MCF 10A (cell line): ENCODE measurements at regions of chr1 and their contacts with region 1.

Region 1: GRCh38 chr1:225603538-225604354 is 49.2 kb downstream of the ENAH start:
- DNase-seq: peak; percentile 86
- H3K4me3 Mint-ChIP-seq: peak overlapping the region; percentile 68
- H3K27ac Mint-ChIP-seq: peak overlapping the region; percentile 95
- H3K4me1 Mint-ChIP-seq: peaks cover 61% of the 10 kb centered on the region
- H3K27me3 Mint-ChIP-seq: no peaks in the 10 kb centered on the region
- CTCF ChIP-seq: no peak

Region 2: DNA sequence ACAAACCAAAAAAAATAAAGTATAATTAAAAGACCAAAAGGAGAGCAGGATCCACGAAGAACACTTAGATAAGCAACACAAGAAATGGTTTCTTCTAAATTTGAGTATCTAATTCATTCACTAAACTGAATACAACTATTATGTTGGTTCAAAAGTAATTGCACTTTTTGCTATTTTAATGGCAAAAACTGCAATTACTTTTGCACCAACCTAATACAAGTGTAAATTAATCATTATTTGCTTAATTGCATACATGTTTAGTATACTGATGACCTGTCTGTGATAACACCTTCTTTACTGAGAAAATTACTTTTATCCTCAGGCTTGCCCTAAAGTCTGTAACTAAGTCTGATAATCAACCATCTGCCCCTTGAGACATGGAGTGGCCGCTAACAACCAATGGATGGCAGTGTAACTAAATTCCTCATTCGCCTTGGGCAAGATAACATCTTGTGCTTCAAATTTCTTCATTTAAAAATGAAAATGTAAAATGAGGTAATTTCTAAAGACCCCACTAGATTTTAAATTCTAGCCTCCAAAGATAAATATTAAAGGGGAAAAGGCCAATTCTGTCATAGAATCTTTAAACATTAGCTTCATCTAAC is 36.1 kb before region 1 on chr1:
- CTCF ChIA-PET with region 1: interaction called, 3 read pairs
- POLR2A ChIA-PET with region 1: interaction called, 11 read pairs
- intact Hi-C with region 1: no loop called
- DNase-seq: peak; percentile 44
- H3K4me3 Mint-ChIP-seq: no peak overlapping the region
- H3K27ac Mint-ChIP-seq: no peak overlapping the region
- H3K4me1 Mint-ChIP-seq: peaks cover 13% of the 10 kb centered on the region
- H3K27me3 Mint-ChIP-seq: no peaks in the 10 kb centered on the region
- CTCF ChIP-seq: peak; percentile 20

Region 3: GRCh38 chr1:225627304-225627947 is 23.7 kb after region 1 on chr1:
- CTCF ChIA-PET with region 1: interaction called, 8 read pairs
- POLR2A ChIA-PET with region 1: interaction called, 131 read pairs
- intact Hi-C with region 1: no loop called
- DNase-seq: no peak
- H3K4me3 Mint-ChIP-seq: no peak overlapping the region
- H3K27ac Mint-ChIP-seq: peak overlapping the region; percentile 47
- H3K4me1 Mint-ChIP-seq: peaks cover 31% of the 10 kb centered on the region
- H3K27me3 Mint-ChIP-seq: no peaks in the 10 kb centered on the region
- CTCF ChIP-seq: no peak

Region 4: DNA sequence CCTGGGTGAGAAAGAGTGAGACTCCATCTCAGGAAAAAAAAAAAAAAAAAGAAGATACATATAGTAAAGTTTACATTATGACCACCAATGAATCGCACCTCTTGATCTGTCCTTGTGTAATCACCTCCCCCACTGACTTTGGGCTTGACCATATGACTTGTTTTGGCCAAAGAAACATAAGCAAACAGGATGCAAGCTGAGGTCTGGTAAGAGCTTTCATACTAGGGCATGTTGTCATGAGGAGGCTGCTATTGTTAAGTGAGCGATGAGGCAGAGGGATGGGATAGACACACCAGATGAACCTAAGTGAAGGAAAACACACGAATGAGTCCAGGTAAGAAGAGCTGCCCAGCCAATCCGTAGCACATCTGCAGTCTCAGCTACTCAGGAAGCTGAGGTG is 38.4 kb after region 1 on chr1:
- CTCF ChIA-PET with region 1: interaction called, 5 read pairs
- POLR2A ChIA-PET with region 1: interaction called, 89 read pairs
- intact Hi-C with region 1: no loop called
- DNase-seq: no peak
- H3K4me3 Mint-ChIP-seq: no peak overlapping the region
- H3K27ac Mint-ChIP-seq: no peak overlapping the region
- H3K4me1 Mint-ChIP-seq: peaks cover 17% of the 10 kb centered on the region
- H3K27me3 Mint-ChIP-seq: no peaks in the 10 kb centered on the region
- CTCF ChIP-seq: no peak

Region 5: GRCh38 chr1:225700164-225700740 is 96.5 kb after region 1 on chr1:
- CTCF ChIA-PET with region 1: no interaction called
- POLR2A ChIA-PET with region 1: interaction called, 26 read pairs
- intact Hi-C with region 1: no loop called
- DNase-seq: peak; percentile 100
- H3K4me3 Mint-ChIP-seq: peak overlapping the region; percentile 68
- H3K27ac Mint-ChIP-seq: peak overlapping the region; percentile 94
- H3K4me1 Mint-ChIP-seq: peaks cover 26% of the 10 kb centered on the region
- H3K27me3 Mint-ChIP-seq: no peaks in the 10 kb centered on the region
- CTCF ChIP-seq: no peak